Pancreas (tissue), 10 donors: ENCODE measurements at regions of chr7 and their contacts with region 1.

Region 1: DNA sequence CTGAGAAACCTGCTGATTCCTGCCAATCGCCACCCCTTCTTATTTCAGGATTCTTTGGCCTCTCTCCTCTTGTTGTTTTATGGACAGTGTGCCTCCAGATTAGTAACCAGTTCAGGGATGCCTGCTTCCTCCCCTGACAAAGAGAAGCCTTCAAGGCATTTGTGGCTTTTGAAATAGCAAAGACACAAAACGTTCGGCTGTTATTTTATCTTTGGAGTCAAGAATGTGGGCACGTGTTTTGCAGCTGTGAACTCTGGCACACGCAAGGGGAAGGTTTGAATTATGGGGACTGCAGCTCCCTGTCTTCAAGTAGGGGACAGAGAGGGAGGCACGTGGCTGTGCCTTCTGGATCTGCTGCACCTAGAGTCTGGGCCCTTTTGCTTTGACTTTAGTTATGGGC is 157.9 kb upstream of the GRB10 start:
- DNase-seq: no peak
- ATAC-seq: no peak
- H3K4me3 ChIP-seq: no peak overlapping the region
- H3K27ac ChIP-seq: no peak overlapping the region
- H3K4me1 ChIP-seq: no peaks in the 10 kb centered on the region
- H3K27me3 ChIP-seq: no peaks in the 10 kb centered on the region
- CTCF ChIP-seq: no peak

Region 2: DNA sequence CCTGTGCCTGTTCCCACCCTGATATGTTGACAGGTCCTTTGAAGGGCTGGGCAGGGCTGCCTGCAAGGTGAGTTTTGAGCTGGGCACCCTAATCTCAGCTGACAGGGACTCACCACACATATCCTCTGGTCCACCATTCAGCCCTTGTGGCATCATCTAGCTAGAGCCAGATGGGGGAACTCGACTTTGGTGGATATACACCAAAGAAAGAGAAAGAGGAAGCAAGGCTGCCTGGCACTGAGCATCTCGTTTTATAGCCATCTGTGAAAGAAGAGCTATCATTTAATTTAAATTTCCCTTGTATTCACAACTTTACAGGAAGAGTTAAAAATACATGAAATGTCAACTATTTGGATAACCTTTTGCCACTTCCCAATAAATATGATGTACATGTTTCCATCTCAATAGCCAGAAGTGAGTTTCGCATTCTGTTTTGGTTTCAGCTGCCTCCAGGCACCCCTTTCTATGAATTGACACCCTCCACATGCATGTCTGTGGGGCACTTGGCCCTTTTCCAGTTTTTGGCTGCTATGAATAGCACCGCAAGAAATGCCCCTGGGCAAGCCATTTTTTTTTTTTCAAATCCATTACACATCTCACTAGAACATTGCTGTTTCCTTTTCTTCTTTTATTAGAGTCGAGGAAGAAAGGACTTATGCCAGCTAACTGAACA is 135.0 kb before region 1 on chr7:
- intact Hi-C with region 1: loop called in 1 of 3 experiments (anchors 10 kb)
- DNase-seq: no peak
- ATAC-seq: no peak
- H3K4me3 ChIP-seq: no peak overlapping the region
- H3K27ac ChIP-seq: no peak overlapping the region
- H3K4me1 ChIP-seq: peaks cover 0 to 5% (median 0%) of the 10 kb centered on the region in 3 donors
- H3K27me3 ChIP-seq: no peaks in the 10 kb centered on the region
- CTCF ChIP-seq: no peak